Activated CD4-positive, alpha-beta T cell treated with anti-CD3 and anti-CD28 coated beads for 36 hours (primary cell): ENCODE measurements at regions of chr10 and their contacts with region 1.

Region 1: GRCh38 chr10:60964257-60965235 is 20.6 kb upstream of the RHOBTB1 start:
- DNase-seq: peak; percentile 70
- ATAC-seq: peak; percentile 69
- H3K4me3 Mint-ChIP-seq: no peak overlapping the region
- H3K27ac Mint-ChIP-seq: no peak overlapping the region
- H3K4me1 Mint-ChIP-seq: peaks cover 32% of the 10 kb centered on the region
- H3K27me3 Mint-ChIP-seq: peaks cover 11% of the 10 kb centered on the region

Region 2: DNA sequence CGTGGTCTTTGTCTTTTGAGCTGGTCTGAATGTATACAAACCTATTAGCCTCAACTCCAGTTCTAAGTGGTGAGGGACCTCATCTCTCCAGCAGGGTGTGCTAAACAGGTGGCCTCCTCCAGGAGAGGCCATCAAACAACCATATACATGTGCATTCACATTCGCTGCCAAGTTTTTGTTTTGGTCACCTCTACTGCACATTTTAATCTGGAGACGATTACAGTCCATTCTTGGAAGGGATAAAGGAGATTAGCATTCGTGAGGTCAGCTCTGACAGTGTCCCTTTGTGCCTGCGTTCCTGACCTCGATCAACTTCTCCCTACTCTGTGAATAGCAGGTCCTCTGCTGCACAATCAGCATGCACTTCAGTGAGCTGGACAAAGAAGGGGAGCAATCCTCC is 81.4 kb before region 1 on chr10:
- CTCF ChIA-PET with region 1: no interaction called
- POLR2A ChIA-PET with region 1: no interaction called
- intact Hi-C with region 1: loop called in 1 of 2 experiments (anchors 1 kb)
- DNase-seq: peak; percentile 13
- ATAC-seq: peak; percentile 33
- H3K4me3 Mint-ChIP-seq: no peak overlapping the region
- H3K27ac Mint-ChIP-seq: no peak overlapping the region
- H3K4me1 Mint-ChIP-seq: no peaks in the 10 kb centered on the region
- H3K27me3 Mint-ChIP-seq: no peaks in the 10 kb centered on the region

Region 3: DNA sequence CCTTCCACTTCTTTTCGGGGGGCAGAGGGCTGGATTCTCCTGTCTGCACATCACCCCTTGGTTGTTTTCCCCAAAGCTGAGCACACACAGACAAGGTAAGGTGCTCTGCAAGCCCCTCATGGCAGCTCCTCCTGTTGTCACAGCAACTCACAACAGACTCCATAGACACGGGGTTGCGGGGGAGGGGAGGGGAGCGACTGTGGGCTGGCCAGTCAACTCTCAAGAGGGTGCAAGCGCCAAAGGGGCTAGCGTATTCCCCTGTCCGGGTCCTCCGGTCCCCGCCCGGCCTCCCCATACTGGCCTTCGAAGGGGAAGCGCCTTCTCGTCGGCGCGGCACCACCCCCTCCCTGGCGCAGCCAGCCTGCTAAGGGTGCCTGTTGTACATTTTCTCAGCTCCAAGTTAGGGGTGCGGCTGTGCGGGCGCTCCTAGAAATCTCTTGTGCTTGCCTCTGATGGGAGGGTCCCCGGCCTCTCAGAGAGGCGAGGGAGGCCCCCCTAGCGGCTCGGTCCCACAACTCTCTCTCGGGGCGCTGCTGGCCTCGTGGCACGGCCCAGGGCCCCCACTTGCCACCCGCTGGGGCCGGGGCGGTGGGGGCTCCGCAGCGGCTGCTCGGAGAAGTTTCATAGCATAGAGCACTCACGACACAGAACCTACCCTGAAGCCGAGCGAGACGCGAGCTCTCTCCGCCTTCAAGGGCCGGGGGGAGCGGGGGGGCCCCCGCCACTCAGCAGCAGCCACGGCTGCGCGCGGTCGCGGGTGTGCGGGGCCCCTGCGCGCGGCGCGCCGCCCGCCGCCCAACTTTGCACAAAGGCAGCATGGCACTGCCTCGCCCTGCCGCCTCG is 21.0 kb before region 1 on chr10:
- CTCF ChIA-PET with region 1: interaction called, 7 read pairs
- POLR2A ChIA-PET with region 1: no interaction called
- intact Hi-C with region 1: loop called in 1 of 2 experiments (anchors 2 kb)
- DNase-seq: peak; percentile 54
- ATAC-seq: peak; percentile 45
- H3K4me3 Mint-ChIP-seq: peak overlapping the region; percentile 54
- H3K27ac Mint-ChIP-seq: no peak overlapping the region
- H3K4me1 Mint-ChIP-seq: peaks cover 10% of the 10 kb centered on the region
- H3K27me3 Mint-ChIP-seq: peaks cover 38% of the 10 kb centered on the region

Region 4: DNA sequence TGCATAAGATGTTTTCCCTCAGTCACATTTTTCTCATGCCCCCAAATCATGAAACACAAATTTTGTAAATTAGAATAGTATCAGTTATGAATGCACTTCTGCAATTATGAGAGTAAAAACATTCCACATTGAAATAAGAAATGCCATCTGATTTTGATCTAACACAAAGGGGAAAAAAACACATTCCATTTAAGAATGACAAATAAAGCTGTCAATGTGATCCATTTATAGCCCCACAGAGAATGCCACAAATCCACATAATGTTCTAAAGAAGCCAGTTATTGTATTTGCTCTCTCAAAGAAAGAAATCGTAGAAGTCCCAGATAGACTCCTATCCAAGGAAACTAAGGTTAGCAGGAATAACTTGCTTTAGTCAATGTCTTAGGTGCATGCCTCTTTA is 28.1 kb after region 1 on chr10:
- CTCF ChIA-PET with region 1: no interaction called
- POLR2A ChIA-PET with region 1: no interaction called
- intact Hi-C with region 1: no loop called
- DNase-seq: no peak
- ATAC-seq: no peak
- H3K4me3 Mint-ChIP-seq: no peak overlapping the region
- H3K27ac Mint-ChIP-seq: no peak overlapping the region
- H3K4me1 Mint-ChIP-seq: peaks cover 2% of the 10 kb centered on the region
- H3K27me3 Mint-ChIP-seq: peaks cover 10% of the 10 kb centered on the region

Region 5: GRCh38 chr10:61284222-61284890 is 319.8 kb after region 1 on chr10:
- CTCF ChIA-PET with region 1: interaction called, 4 read pairs
- POLR2A ChIA-PET with region 1: no interaction called
- intact Hi-C with region 1: loop called (anchors 5 kb)
- DNase-seq: no peak
- ATAC-seq: no peak
- H3K4me3 Mint-ChIP-seq: peak overlapping the region; percentile 35
- H3K27ac Mint-ChIP-seq: no peak overlapping the region
- H3K4me1 Mint-ChIP-seq: peaks cover 15% of the 10 kb centered on the region
- H3K27me3 Mint-ChIP-seq: no peaks in the 10 kb centered on the region